ENCODE measurements at regions of chr12 and their contacts with region 1.

Region 1: GRCh38 chr12:89346741-89347324 is 5.5 kb downstream of the DUSP6 start:
- DNase-seq: no peak
- H3K4me3 ChIP-seq: no peak overlapping the region
- H3K4me3 Mint-ChIP-seq: peak overlapping the region; percentile 80 to 92 (median 86)
- H3K27ac ChIP-seq: no peak overlapping the region
- H3K27ac Mint-ChIP-seq: peak overlapping the region; percentile 11 to 86 (median 70)
- H3K4me1 ChIP-seq: peaks cover 35% of the 10 kb centered on the region
- H3K4me1 Mint-ChIP-seq: peaks cover 46 to 64% (median 63%) of the 10 kb centered on the region in 3 donors
- H3K27me3 ChIP-seq: no peaks in the 10 kb centered on the region
- H3K27me3 Mint-ChIP-seq: no peaks in the 10 kb centered on the region

Region 2: GRCh38 chr12:88904705-88905104 is 442.1 kb before region 1 on chr12:
- CTCF ChIA-PET with region 1: no interaction called
- POLR2A ChIA-PET with region 1: no interaction called
- DNase-seq: no peak
- H3K4me3 ChIP-seq: no peak overlapping the region
- H3K4me3 Mint-ChIP-seq: no peak overlapping the region
- H3K27ac ChIP-seq: no peak overlapping the region
- H3K27ac Mint-ChIP-seq: no peak overlapping the region
- H3K4me1 ChIP-seq: no peaks in the 10 kb centered on the region
- H3K4me1 Mint-ChIP-seq: no peaks in the 10 kb centered on the region
- H3K27me3 ChIP-seq: no peaks in the 10 kb centered on the region
- H3K27me3 Mint-ChIP-seq: peaks cover 0 to 5% of the 10 kb centered on the region in 2 donors

Region 3: GRCh38 chr12:89333564-89334252 is 13.1 kb before region 1 on chr12:
- CTCF ChIA-PET with region 1: no interaction called
- POLR2A ChIA-PET with region 1: interaction called, 13 read pairs
- DNase-seq: no peak
- H3K4me3 ChIP-seq: no peak overlapping the region
- H3K4me3 Mint-ChIP-seq: peak overlapping the region in 5 of 7 donors; percentile 25 to 63 (median 45)
- H3K27ac ChIP-seq: no peak overlapping the region
- H3K27ac Mint-ChIP-seq: peak overlapping the region in 3 of 8 donors; percentile 39 to 53 (median 50)
- H3K4me1 ChIP-seq: no peaks in the 10 kb centered on the region
- H3K4me1 Mint-ChIP-seq: peaks cover 11 to 19% (median 14%) of the 10 kb centered on the region in 3 donors
- H3K27me3 ChIP-seq: no peaks in the 10 kb centered on the region
- H3K27me3 Mint-ChIP-seq: peaks cover 3 to 8% of the 10 kb centered on the region in 2 donors

Measured in CD8-positive, alpha-beta memory T cell (primary cell).